ENCODE measurements at regions of chr20 and their contacts with region 1.

Region 1: DNA sequence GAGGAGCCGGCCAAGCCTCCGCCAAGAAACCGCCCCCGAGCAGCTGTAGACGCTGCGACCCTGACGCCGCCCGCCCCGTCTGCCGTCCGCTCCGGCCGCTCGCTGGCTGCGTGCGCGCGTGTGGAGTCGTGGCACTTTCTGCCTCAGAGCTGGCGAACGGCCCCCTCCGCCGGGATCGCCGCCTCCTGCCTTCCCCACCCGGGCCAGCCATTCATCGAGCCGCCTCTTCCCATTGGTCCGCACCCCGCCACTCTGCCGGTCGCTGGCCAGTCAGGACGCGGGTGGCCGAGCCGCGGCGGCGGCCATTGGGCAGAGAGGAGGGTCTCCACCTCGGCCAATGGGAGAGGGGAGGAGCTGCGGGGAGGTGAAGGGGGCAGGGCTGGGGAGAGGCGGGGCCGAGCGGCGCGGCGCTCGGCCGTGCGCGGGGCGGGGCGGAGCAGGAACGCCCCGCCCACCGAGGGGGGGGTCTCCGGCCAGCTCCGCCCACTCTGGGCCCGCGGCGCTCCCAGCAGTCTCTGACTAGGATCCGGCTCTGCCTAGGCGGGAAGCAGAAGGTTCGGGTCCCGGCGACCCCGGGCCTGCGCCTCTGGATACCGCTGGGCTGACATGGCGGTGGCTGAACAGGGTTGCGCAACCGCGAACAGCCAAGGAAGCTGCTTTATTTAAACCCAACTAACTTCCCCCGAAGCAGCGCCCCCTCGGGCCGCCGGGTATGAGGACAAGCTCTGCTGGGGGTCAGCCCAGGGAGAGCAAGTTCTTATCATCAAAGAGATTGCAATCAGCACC is at the start of gene RRBP1:
- DNase-seq: peak; percentile 100
- ATAC-seq: peak; percentile 81 to 94 (median 86)
- H3K4me3 ChIP-seq: peak within 1 kb of the TSS; percentile 74 to 89 (median 85)
- H3K27ac ChIP-seq: peak within 1 kb of the TSS; percentile 83 to 94 (median 87)
- H3K4me1 ChIP-seq: peaks cover 0 to 51% (median 21%) of the 10 kb centered on the region in 4 donors
- H3K27me3 ChIP-seq: no peaks in the 10 kb centered on the region
- CTCF ChIP-seq: peak; percentile 44 to 57 (median 52)
- POLR2A ChIP-seq: peak; percentile 99
- total RNA-seq, gene RRBP1: 121 to 274 (median 193) TPM

Region 2: GRCh38 chr20:17262786-17263185 is 419.5 kb before region 1 on chr20:
- intact Hi-C with region 1: no loop called
- DNase-seq: no peak
- ATAC-seq: no peak
- H3K4me3 ChIP-seq: no peak overlapping the region
- H3K27ac ChIP-seq: no peak overlapping the region
- H3K4me1 ChIP-seq: no peaks in the 10 kb centered on the region
- H3K27me3 ChIP-seq: no peaks in the 10 kb centered on the region
- CTCF ChIP-seq: no peak
- POLR2A ChIP-seq: no peak

Region 3: GRCh38 chr20:17796091-17796563 is 113.8 kb after region 1 on chr20:
- intact Hi-C with region 1: loop called in 1 of 2 experiments (anchors 10 kb)
- DNase-seq: peak; percentile 72 to 90 (median 86)
- ATAC-seq: peak; percentile 83 to 91 (median 86)
- H3K4me3 ChIP-seq: no peak overlapping the region
- H3K27ac ChIP-seq: peak overlapping the region; percentile 70 to 88 (median 84)
- H3K4me1 ChIP-seq: peaks cover 0 to 38% (median 18%) of the 10 kb centered on the region in 4 donors
- H3K27me3 ChIP-seq: no peaks in the 10 kb centered on the region
- CTCF ChIP-seq: no peak
- POLR2A ChIP-seq: peak; percentile 25

Region 4: DNA sequence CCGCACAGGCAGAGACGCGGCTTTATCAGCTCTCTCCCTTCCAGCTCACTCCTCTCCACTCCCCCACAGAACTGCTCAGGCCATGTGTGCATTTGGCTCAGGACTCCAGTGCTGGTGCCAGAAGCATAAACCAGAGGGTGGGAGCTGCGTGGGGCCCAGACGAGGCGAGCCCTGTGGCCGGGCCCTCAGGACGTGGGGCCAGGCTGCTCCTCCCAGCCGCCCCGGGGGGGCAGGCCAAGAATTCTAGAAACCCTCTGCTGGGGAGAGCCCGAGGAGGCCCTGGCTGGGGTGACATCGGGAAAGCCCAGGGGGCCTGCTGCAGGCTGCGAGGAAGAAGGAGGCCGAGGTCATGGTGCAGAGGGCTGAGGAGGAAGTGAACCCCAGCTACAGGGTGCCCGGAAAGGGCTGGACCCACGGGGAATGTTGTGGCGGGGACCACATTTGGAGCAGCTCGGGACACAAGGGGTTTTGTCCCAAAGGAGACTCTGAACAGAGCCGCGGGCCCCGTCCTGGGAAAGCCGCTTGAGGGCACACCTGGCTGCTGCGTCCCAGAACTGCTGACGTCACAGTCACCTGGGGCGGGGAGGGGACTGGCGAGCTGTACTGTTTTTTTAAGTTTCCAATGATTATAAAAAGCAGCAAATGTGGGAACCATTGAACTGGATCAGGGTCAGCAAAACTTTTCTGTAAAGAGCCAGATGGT is 124.6 kb after region 1 on chr20:
- intact Hi-C with region 1: no loop called
- DNase-seq: peak; percentile 64 to 81 (median 69)
- ATAC-seq: peak; percentile 39 to 71 (median 52)
- H3K4me3 ChIP-seq: no peak overlapping the region
- H3K27ac ChIP-seq: peak overlapping the region; percentile 31 to 58 (median 57)
- H3K4me1 ChIP-seq: peaks cover 0 to 66% (median 24%) of the 10 kb centered on the region in 4 donors
- H3K27me3 ChIP-seq: no peaks in the 10 kb centered on the region
- CTCF ChIP-seq: peak in 1 of 4 donors; percentile 16
- POLR2A ChIP-seq: no peak

Region 5: DNA sequence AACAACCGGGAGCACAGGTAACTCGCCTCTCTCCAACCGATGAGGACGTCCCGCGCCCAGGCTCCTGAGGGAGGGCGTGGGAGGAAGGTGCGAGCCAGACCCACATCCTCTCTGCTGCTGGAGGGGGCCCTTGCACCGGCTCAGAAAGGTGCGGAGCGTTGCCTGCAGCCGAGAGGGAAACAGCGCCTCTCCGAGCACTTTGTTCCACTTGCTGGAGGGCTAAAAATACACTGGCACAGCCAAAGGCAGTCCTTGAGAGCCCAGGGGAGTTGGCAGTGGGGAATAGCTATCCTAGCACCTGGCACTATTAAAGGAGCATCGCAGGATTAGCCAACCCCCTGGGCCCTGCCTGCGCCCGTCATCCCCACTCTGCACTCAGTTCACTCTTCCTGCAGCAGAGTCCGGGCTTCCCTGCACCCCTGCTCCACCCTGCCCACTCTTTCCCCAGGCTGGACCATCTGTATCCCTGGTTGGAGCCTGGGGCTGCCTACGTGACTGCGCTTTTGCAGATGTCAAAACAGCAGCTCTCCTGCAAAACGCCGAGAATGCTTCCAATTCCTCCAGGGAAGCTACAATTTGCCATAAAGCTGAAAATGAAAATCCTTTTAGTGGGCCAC is 177.4 kb after region 1 on chr20:
- intact Hi-C with region 1: loop called in 1 of 2 experiments (anchors 10 kb)
- DNase-seq: peak; percentile 59 to 82 (median 81)
- ATAC-seq: peak; percentile 67 to 77 (median 74)
- H3K4me3 ChIP-seq: peak overlapping the region; percentile 10 to 38 (median 32)
- H3K27ac ChIP-seq: peak overlapping the region; percentile 45 to 80 (median 76)
- H3K4me1 ChIP-seq: peaks cover 0 to 52% (median 18%) of the 10 kb centered on the region in 4 donors
- H3K27me3 ChIP-seq: no peaks in the 10 kb centered on the region
- CTCF ChIP-seq: peak in 3 of 4 donors; percentile 7 to 43 (median 27)
- POLR2A ChIP-seq: no peak

Region 6: GRCh38 chr20:17885544-17885943 is 203.2 kb after region 1 on chr20:
- intact Hi-C with region 1: loop called in 1 of 2 experiments (anchors 10 kb)
- DNase-seq: no peak
- ATAC-seq: peak; percentile 19 to 52 (median 26)
- H3K4me3 ChIP-seq: no peak overlapping the region
- H3K27ac ChIP-seq: no peak overlapping the region
- H3K4me1 ChIP-seq: peaks cover 0 to 7% (median 2%) of the 10 kb centered on the region in 4 donors
- H3K27me3 ChIP-seq: no peaks in the 10 kb centered on the region
- CTCF ChIP-seq: no peak
- POLR2A ChIP-seq: no peak

Measured in right lobe of liver (tissue), 6 donors.